ENCODE measurements at regions of chr2 and their contacts with region 1.

Region 1: DNA sequence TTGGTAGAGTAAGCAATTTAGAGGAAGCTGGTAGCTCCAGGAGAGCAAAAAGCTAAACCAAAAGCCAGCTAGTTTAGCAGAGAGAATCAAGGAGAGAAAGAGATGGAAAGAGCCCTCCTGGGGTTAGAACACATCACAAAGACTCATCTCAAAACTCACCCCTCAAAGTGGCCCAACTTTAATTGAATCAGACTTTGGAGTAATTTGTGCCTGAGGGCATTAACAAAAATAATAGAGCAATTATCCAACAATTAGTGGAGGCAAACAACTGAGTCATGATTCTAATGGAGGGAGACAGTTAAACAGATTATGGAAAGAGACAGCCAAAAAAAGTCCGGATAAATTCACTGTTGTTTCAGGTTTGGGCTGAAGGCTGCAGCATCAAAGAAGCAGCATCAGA is 417.4 kb downstream of the KCNJ3 start:
- DNase-seq: no peak
- ATAC-seq: no peak
- H3K4me3 ChIP-seq: no peak overlapping the region
- H3K27ac ChIP-seq: no peak overlapping the region
- H3K4me1 ChIP-seq: no peaks in the 10 kb centered on the region
- H3K27me3 ChIP-seq: no peaks in the 10 kb centered on the region
- CTCF ChIP-seq: no peak

Region 2: DNA sequence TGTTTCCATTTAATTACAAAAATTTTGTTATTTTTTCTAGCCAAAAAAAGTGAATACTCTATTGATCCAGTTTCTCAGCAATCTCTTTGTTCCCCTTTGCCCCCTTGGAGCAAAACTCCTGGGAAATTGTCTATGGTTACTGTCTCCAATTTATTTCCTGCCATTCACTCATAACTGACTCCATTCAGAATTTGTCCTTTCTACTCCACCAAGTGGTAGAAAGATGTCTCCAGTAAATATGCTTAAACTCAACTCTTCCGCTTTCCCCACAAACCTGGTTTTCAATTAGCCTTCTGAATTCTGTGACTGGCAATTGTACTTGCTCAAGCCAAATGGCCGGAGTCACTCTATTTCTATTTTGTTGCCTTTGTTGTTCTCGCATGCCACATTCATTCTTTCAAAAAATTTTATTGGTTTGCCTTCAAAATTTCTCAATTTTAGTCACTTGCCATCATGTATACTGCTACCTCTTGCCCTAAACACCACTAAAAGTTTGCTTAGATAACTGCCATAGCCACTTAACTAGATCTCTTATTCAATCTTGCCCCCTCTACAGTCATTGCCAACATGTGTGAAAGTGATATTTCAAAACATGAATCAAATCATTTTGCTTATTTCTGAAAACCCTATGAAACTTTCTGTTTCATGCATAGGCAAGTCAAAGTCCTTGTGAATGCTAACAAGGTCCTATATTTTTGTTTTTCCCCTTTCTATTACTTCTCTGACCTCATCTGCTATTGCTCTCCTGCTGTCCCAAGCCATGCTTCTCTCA is 20.4 kb before region 1 on chr2:
- CTCF ChIA-PET with region 1: no interaction called
- POLR2A ChIA-PET with region 1: no interaction called
- in situ Hi-C with region 1: no loop called
- intact Hi-C with region 1: loop called (anchors 2 kb)
- DNase-seq: no peak
- ATAC-seq: no peak
- H3K4me3 ChIP-seq: no peak overlapping the region
- H3K27ac ChIP-seq: no peak overlapping the region
- H3K4me1 ChIP-seq: no peaks in the 10 kb centered on the region
- H3K27me3 ChIP-seq: no peaks in the 10 kb centered on the region
- CTCF ChIP-seq: no peak

Measured in Panc1 (cell line).